Natural killer cell (primary cell): ENCODE measurements at regions of chr16 and their contacts with region 1.

Region 1: GRCh38 chr16:56425439-56425832 is at the start of gene AMFR:
- DNase-seq: peak; percentile 72 to 92
- ATAC-seq: peak; percentile 94 to 98 (median 95)
- H3K4me3 ChIP-seq: peak within 1 kb of the TSS; percentile 50
- H3K4me3 Mint-ChIP-seq: peak within 1 kb of the TSS; percentile 96
- H3K27ac ChIP-seq: peak within 1 kb of the TSS; percentile 28
- H3K27ac Mint-ChIP-seq: peak within 1 kb of the TSS; percentile 82 to 91
- H3K4me1 ChIP-seq: peaks cover 16% of the 10 kb centered on the region
- H3K4me1 Mint-ChIP-seq: peaks cover 31 to 36% of the 10 kb centered on the region in 2 donors
- H3K27me3 ChIP-seq: no peaks in the 10 kb centered on the region
- H3K27me3 Mint-ChIP-seq: no peaks in the 10 kb centered on the region
- CTCF ChIP-seq: peak; percentile 40
- total RNA-seq, gene AMFR: 58.4 to 87.1 (median 71.7) TPM

Region 2: GRCh38 chr16:56332464-56333079 is 92.9 kb before region 1 on chr16:
- intact Hi-C with region 1: no loop called
- DNase-seq: no peak
- ATAC-seq: no peak
- H3K4me3 ChIP-seq: no peak overlapping the region
- H3K4me3 Mint-ChIP-seq: no peak overlapping the region
- H3K27ac ChIP-seq: no peak overlapping the region
- H3K27ac Mint-ChIP-seq: no peak overlapping the region
- H3K4me1 ChIP-seq: no peaks in the 10 kb centered on the region
- H3K4me1 Mint-ChIP-seq: no peaks in the 10 kb centered on the region
- H3K27me3 ChIP-seq: no peaks in the 10 kb centered on the region
- H3K27me3 Mint-ChIP-seq: no peaks in the 10 kb centered on the region
- CTCF ChIP-seq: no peak

Region 3: GRCh38 chr16:56436258-56436657 is 10.8 kb after region 1 on chr16:
- intact Hi-C with region 1: no loop called
- DNase-seq: no peak
- ATAC-seq: no peak
- H3K4me3 ChIP-seq: no peak overlapping the region
- H3K4me3 Mint-ChIP-seq: no peak overlapping the region
- H3K27ac ChIP-seq: no peak overlapping the region
- H3K27ac Mint-ChIP-seq: no peak overlapping the region
- H3K4me1 ChIP-seq: no peaks in the 10 kb centered on the region
- H3K4me1 Mint-ChIP-seq: peaks cover 0 to 9% of the 10 kb centered on the region in 2 donors
- H3K27me3 ChIP-seq: no peaks in the 10 kb centered on the region
- H3K27me3 Mint-ChIP-seq: no peaks in the 10 kb centered on the region
- CTCF ChIP-seq: no peak

Region 4: DNA sequence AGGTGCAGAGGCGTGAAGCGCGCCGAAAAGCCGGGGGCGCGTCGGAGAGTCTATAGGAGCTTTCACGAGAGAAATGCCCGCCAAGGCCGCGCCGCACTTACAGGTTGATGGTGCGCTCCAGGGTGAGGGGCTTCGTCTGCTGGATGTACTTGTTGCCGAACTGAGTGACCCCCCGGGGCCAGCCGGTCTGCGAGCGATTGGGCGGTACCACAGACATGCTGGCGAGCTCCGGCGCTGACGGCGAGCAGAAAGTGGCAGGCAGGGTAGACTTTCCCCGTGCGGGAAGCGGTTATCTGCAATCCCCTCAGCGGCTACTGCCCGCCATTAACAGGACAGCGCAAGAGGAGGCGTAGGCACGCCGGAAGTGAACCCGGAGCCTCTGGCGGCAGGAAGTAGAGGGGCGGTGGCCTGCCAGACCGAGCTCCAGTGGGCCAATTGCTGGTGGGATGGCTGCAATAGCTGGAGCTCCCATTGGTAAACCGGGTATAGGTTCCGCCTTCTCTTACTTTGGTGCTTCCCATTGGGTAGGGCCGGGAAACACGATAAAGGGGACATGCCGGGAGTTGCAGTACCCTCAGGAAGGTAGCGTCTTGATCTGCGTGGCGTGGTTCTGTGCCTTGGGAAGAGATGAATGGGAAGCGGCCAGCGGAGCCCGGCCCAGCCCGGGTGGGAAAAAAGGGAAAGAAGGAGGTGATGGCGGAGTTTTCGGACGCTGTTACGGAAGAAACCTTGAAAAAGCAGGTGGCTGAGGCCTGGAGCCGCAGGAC is 25.7 kb after region 1 on chr16 and contains the starts of genes NUDT21 and OGFOD1:
- intact Hi-C with region 1: loop called (anchors 2 kb)
- DNase-seq: peak; percentile 79 to 97
- ATAC-seq: peak; percentile 98 to 100 (median 98)
- H3K4me3 ChIP-seq: peak within 1 kb of the TSS; percentile 95
- H3K4me3 Mint-ChIP-seq: peak within 1 kb of the TSS; percentile 96
- H3K27ac ChIP-seq: peak within 1 kb of the TSS; percentile 70
- H3K27ac Mint-ChIP-seq: peak within 1 kb of the TSS; percentile 89 to 90
- H3K4me1 ChIP-seq: peaks cover 20% of the 10 kb centered on the region
- H3K4me1 Mint-ChIP-seq: peaks cover 51 to 52% of the 10 kb centered on the region in 2 donors
- H3K27me3 ChIP-seq: no peaks in the 10 kb centered on the region
- H3K27me3 Mint-ChIP-seq: no peaks in the 10 kb centered on the region
- CTCF ChIP-seq: no peak
- total RNA-seq, gene NUDT21: 78.1 to 108 (median 90.0) TPM
- total RNA-seq, gene OGFOD1: 12.7 to 20.6 (median 13.1) TPM